Activated B cell treated with CpG ODN at 0.5 μM for 24 hours (primary cell): ENCODE measurements at regions of chr12 and their contacts with region 1.

Region 1: GRCh38 chr12:56104109-56104814 is at the start of gene PA2G4:
- DNase-seq: peak; percentile 92
- ATAC-seq: peak; percentile 91
- H3K4me3 Mint-ChIP-seq: peak within 1 kb of the TSS; percentile 98
- H3K27ac Mint-ChIP-seq: peak within 1 kb of the TSS; percentile 93
- H3K4me1 Mint-ChIP-seq: peaks cover 33% of the 10 kb centered on the region
- H3K27me3 Mint-ChIP-seq: no peaks in the 10 kb centered on the region
- CTCF ChIP-seq: no peak
- total RNA-seq, gene PA2G4: 137 and 155 TPM in 2 replicates

Region 2: DNA sequence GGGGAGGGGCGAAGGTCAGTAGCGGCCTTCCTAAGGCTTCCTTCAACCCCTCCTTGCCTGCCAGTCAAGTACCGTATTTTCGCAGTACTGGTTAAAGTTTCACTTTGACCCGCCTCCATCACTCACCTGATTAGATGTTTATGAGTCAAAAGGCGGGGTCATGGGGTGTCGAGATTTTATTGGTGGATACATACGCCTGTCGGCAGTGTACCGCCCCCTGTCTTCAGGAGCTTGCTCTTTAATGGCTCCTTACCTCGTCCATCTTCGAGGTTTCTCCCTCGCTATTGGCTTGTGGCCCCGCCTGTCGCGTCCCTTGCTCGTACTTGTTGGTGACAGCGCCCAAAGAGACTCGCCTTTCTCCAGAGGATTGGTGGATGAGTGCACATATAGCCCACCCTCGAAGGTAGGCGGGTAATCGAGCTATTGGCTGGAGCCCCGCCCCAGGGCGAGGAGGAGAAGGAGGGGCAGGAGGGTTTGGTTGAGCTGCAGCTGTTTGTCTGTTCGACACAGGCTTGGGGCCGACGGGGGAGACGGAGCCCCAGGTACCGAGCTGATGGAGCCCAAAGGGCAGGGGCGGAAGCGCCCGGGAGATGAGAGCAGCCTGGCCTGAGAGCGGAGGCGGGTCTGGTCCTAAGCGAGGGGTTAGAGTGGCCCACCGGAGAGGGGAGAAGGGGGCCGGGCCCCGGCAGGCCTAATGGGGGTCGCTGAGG is 130.5 kb before region 1 on chr12 and contains the start of gene RAB5B:
- CTCF ChIA-PET with region 1: no interaction called
- POLR2A ChIA-PET with region 1: interaction called, 14 read pairs
- intact Hi-C with region 1: no loop called
- DNase-seq: peak; percentile 83
- ATAC-seq: peak; percentile 87
- H3K4me3 Mint-ChIP-seq: no peak within 1 kb of the TSS
- H3K27ac Mint-ChIP-seq: no peak within 1 kb of the TSS
- H3K4me1 Mint-ChIP-seq: peaks cover 27% of the 10 kb centered on the region
- H3K27me3 Mint-ChIP-seq: no peaks in the 10 kb centered on the region
- CTCF ChIP-seq: no peak
- total RNA-seq, gene RAB5B: 82.1 and 83.8 TPM in 2 replicates

Region 3: DNA sequence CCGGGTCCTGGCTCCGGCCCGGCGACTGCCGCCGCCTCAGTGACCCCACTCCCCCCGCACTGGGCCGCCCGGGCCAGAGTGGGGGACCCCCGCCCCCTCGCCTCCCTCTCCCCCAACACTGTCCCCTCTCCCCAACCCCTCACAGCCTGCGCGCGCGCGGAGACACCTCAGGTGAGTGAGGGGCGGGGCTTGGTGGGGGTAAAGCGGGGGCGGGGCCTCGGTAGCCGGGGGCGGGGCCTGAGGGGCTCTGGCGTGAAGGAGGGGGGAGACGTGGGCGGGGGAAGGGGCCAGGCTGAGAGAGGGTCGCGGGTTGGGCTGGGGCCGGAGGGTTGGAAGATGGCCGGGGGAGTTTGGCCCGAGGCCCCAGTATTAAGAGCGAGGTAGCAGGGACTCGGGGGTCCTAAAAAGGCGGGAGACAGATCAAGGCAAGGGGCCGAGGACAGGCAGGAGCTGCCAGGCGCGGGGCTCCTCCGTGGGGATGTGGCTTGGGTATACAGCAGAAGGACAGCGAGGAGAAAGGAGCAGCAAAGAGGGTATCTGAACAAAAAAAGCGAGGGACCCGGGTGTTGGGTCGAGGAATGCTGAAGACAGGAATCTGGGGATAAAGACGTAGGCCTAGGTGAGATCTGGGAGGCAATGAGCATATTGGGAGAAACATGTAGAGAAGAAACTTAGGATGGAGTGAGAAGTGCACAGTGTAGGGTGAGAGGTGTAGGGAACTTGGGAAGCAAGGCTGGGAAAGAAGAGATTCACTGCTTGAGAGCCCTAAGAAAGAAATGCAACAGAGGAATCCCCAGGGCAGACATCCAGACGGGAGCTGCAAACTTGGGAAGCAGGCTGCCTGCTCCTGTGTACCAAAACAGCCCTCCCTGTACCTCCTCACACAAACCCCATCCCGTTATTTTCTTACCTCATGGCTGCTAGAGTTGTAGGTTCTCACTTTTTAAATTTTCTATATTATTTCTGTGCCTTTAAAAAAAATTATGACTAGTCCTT is 96.4 kb before region 1 on chr12:
- CTCF ChIA-PET with region 1: no interaction called
- POLR2A ChIA-PET with region 1: interaction called, 7 read pairs
- intact Hi-C with region 1: loop called (anchors 1 kb)
- DNase-seq: peak; percentile 71
- ATAC-seq: peak; percentile 92
- H3K4me3 Mint-ChIP-seq: peak overlapping the region; percentile 88
- H3K27ac Mint-ChIP-seq: peak overlapping the region; percentile 79
- H3K4me1 Mint-ChIP-seq: peaks cover 9% of the 10 kb centered on the region
- H3K27me3 Mint-ChIP-seq: no peaks in the 10 kb centered on the region
- CTCF ChIP-seq: no peak

Region 4: GRCh38 chr12:56078990-56079664 is 25.1 kb before region 1 on chr12:
- CTCF ChIA-PET with region 1: interaction called, 6 read pairs
- POLR2A ChIA-PET with region 1: interaction called, 9 read pairs
- intact Hi-C with region 1: loop called (anchors 1 kb)
- DNase-seq: peak; percentile 52
- ATAC-seq: peak; percentile 82
- H3K4me3 Mint-ChIP-seq: peak overlapping the region; percentile 88
- H3K27ac Mint-ChIP-seq: no peak overlapping the region
- H3K4me1 Mint-ChIP-seq: peaks cover 10% of the 10 kb centered on the region
- H3K27me3 Mint-ChIP-seq: peaks cover 22% of the 10 kb centered on the region
- CTCF ChIP-seq: no peak

Region 5: GRCh38 chr12:56152318-56153033 is 48.2 kb after region 1 on chr12 and contains the start of gene MYL6B:
- CTCF ChIA-PET with region 1: no interaction called
- POLR2A ChIA-PET with region 1: interaction called, 10 read pairs
- intact Hi-C with region 1: loop called (anchors 1 kb)
- DNase-seq: peak; percentile 87
- ATAC-seq: peak; percentile 89
- H3K4me3 Mint-ChIP-seq: peak within 1 kb of the TSS; percentile 93
- H3K27ac Mint-ChIP-seq: peak within 1 kb of the TSS; percentile 99
- H3K4me1 Mint-ChIP-seq: peaks cover 40% of the 10 kb centered on the region
- H3K27me3 Mint-ChIP-seq: no peaks in the 10 kb centered on the region
- CTCF ChIP-seq: no peak
- total RNA-seq, gene MYL6B: 25.2 and 36.2 TPM in 2 replicates

Region 6: GRCh38 chr12:56488041-56488955 is 384.0 kb after region 1 on chr12 and contains the start of gene GLS2:
- CTCF ChIA-PET with region 1: no interaction called
- POLR2A ChIA-PET with region 1: interaction called, 10 read pairs
- intact Hi-C with region 1: no loop called
- DNase-seq: peak; percentile 67
- ATAC-seq: peak; percentile 99
- H3K4me3 Mint-ChIP-seq: peak within 1 kb of the TSS; percentile 92
- H3K27ac Mint-ChIP-seq: peak within 1 kb of the TSS; percentile 81
- H3K4me1 Mint-ChIP-seq: peaks cover 17% of the 10 kb centered on the region
- H3K27me3 Mint-ChIP-seq: peaks cover 13% of the 10 kb centered on the region
- CTCF ChIP-seq: no peak
- total RNA-seq, gene GLS2: 2.6 and 3.5 TPM in 2 replicates